ENCODE measurements at regions of chr17 and their contacts with region 1.

Region 1: DNA sequence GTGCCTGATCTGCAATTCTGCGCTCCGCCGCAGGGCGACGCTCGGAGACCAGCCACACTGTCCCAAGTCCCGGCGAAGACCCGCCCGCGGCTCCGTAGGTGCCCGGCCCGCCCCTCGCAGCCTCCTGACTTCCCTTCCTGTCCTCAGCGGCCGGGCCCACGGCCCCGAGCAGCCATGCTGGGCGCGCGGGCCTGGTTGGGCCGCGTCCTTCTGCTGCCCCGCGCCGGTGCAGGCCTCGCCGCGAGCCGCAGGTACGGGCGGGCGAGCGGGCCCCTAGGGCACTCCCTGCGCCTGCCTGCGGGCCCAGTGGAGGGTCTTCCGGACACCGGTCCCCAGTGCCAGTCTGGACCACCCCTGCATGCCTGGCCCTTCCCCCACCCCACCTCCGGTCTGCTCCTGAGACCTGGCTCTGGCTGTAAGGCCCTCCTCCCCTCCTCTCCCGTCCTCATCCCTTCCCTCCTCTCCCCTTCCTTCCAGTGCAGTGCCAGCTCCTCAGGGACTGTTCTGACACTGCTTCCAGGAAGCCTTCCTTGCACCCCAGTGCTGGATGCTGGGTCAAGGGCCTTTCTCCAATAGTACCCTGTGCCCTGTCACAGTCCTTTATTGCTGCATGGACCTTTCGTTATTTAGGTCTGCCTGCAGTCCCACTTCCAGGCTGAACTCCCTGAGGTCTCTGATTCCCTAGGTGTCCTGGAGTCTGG is at the start of gene SPATA20:
- DNase-seq: peak; percentile 84 to 90 (median 88)
- ATAC-seq: peak; percentile 84
- H3K4me3 ChIP-seq: peak within 1 kb of the TSS; percentile 33
- H3K27ac ChIP-seq: peak within 1 kb of the TSS; percentile 26; the same call in 1 of the 3 replicates
- H3K4me1 ChIP-seq: peaks cover 15 to 53% of the 10 kb centered on the region in 2 experiments; a peak in 4 of 5 replicates
- H3K27me3 ChIP-seq: 0 out of 5 replicates have a peak, but pooled peaks cover 0 to 6% of the 10 kb centered on the region in 2 experiments
- CTCF ChIP-seq: peak; percentile 95 to 97 (median 95)
- EP300 ChIP-seq: no peak
- POLR2A ChIP-seq: no peak
- RAD21 ChIP-seq: peak; percentile 93 to 96
- polyA plus RNA-seq, gene SPATA20: 0.08 to 0.13 TPM

Region 2: DNA sequence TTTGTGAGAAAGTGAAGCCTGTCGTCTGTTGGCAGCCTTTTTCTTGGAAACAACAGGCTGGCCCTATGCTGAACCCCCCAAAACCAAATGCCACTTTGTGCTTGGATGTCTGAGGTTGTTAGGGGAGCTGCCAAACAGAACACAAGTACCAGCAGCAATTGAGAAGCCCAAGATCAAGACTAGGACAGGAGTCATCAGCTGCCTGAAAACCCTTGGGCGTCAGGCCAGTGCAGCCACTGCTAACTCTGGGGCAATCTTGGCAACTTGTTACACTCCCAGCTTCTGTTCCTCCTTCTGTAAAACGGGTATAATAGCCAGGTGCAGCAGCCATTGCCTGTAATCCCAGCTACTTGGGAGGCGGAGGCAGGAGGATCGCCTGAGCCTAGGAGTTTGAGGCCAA is 140.6 kb before region 1 on chr17:
- CTCF ChIA-PET with region 1: no interaction called
- POLR2A ChIA-PET with region 1: no interaction called
- in situ Hi-C with region 1: no loop called
- intact Hi-C with region 1: no loop called
- DNase-seq: no peak
- ATAC-seq: no peak
- H3K4me3 ChIP-seq: no peak overlapping the region
- H3K27ac ChIP-seq: no peak overlapping the region
- H3K4me1 ChIP-seq: peaks cover 0 to 4% of the 10 kb centered on the region in 2 experiments; a peak in 2 of 5 replicates
- H3K27me3 ChIP-seq: no peaks in the 10 kb centered on the region; a peak in 1 of 5 replicates
- CTCF ChIP-seq: no peak
- EP300 ChIP-seq: no peak
- POLR2A ChIP-seq: no peak
- RAD21 ChIP-seq: no peak

Region 3: DNA sequence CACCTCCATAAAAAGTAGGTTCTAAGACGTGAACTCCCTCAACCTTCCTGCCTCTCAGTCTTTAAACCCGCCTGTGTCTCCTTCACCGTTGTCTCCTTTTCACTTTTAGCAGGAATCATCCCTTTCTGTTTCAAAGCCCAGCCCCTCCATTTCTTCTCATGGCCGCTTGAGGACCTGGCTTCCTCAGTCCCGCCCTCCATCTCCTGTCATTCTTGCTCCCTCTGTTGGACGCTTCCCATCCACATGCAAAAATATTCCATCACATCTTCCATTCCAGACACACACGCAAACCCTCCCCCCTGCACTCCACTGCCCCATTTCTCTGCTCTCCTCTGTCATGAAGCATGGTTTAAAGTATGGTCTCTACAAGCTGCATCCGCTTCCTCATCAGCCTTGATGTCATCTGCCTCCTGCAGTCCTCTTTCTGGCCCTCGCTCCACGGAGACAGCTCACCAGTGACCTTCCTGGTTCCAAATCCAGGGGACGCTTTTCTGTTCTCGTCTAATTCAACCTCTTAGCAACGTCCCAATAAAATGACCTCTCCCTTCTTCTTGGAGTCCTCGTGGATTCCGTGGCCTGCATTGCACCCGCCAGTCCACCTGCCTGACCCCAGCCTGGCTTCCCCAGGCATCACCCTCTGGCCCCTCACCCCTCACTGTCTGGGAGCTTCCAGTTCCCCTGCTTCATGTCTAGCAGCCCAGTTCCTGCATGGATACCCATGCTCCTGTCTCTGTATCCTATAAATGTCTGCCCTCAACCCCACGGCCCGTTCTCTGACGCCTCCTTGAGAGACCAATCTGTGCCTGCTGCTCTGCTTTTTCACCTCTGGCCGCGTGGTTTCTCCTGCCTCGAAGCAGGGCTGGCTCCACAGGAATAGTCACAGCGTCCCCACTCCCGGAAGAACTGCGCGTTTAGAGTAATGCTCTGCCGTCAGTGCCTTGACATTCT is 134.4 kb after region 1 on chr17:
- CTCF ChIA-PET with region 1: interaction called, 7 read pairs
- POLR2A ChIA-PET with region 1: interaction called, 3 read pairs
- in situ Hi-C with region 1: no loop called
- intact Hi-C with region 1: loop called (anchors 1 kb)
- DNase-seq: peak; percentile 73 to 79 (median 76)
- ATAC-seq: peak; percentile 86
- H3K4me3 ChIP-seq: no peak overlapping the region
- H3K27ac ChIP-seq: no peak overlapping the region
- H3K4me1 ChIP-seq: peaks cover 4 to 11% of the 10 kb centered on the region in 2 experiments; a peak in 3 of 5 replicates
- H3K27me3 ChIP-seq: peaks cover 5 to 31% of the 10 kb centered on the region in 2 experiments; a peak in 4 of 5 replicates
- CTCF ChIP-seq: peak; percentile 86 to 98 (median 97)
- EP300 ChIP-seq: no peak
- POLR2A ChIP-seq: no peak
- RAD21 ChIP-seq: peak; percentile 90 to 96

Region 4: GRCh38 chr17:50697663-50698274 is 150.6 kb after region 1 on chr17:
- CTCF ChIA-PET with region 1: interaction called, 11 read pairs
- POLR2A ChIA-PET with region 1: interaction called, 4 read pairs
- in situ Hi-C with region 1: loop called (anchors 5 kb)
- intact Hi-C with region 1: loop called (anchors 1 kb)
- DNase-seq: no peak
- ATAC-seq: no peak
- H3K4me3 ChIP-seq: no peak overlapping the region
- H3K27ac ChIP-seq: no peak overlapping the region
- H3K4me1 ChIP-seq: no peaks in the 10 kb centered on the region
- H3K27me3 ChIP-seq: no peaks in the 10 kb centered on the region
- CTCF ChIP-seq: peak in 2 of 3 experiments; percentile 11 to 16; a peak in 1 of 6 replicates
- EP300 ChIP-seq: no peak
- POLR2A ChIP-seq: no peak
- RAD21 ChIP-seq: 0 out of 4 replicates have a peak, but pooled peaks of 1 of the 2 experiments have one; percentile 2

Region 5: DNA sequence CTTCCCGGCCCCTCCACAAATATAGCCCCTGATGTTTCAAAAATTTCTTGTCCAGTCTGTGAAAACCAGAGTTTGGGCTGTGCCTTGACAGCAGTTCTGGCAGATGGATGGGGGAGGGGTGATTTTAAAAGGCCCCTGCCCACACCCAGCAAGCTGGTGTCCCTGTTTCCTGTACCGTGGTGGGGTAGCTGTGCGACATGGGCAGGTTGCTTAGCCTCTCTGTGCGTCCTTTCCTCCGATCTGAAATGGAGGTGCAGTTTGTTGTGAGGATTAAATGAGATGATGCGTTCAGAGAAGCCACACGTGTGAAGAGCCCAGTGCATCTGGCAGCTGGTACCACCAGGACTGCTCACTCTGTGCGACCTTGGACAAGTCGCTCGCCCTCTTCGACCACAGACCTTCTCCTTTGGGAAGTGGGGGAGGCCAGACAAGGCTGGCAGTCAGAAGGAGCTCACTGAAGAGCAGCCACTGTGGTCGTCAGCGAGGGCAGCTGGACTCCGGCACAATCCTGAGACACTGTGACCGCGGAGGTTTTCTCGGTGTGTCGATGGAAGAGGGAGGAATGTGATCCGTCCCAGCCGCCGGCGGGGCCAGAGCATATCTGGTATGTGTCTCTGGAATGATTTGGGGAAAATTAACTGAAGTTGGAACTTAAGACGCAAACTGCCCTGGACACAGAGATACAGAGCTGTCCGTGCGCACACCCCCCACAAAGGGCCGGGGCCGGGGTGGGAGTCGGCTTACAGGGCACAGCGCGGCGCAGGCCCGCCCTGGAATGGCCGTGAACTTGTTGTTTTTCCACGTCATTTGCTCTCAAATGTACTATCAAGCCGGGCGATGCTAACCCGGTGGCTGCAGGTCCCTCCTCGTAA is 287.5 kb after region 1 on chr17:
- CTCF ChIA-PET with region 1: no interaction called
- POLR2A ChIA-PET with region 1: no interaction called
- in situ Hi-C with region 1: loop called (anchors 5 kb)
- intact Hi-C with region 1: no loop called
- DNase-seq: no peak
- ATAC-seq: no peak; the same call in 2 of the 3 replicates
- H3K4me3 ChIP-seq: no peak overlapping the region
- H3K27ac ChIP-seq: no peak overlapping the region
- H3K4me1 ChIP-seq: peaks cover 18 to 54% of the 10 kb centered on the region in 2 experiments
- H3K27me3 ChIP-seq: peaks cover 0 to 20% of the 10 kb centered on the region in 2 experiments; a peak in 3 of 5 replicates
- CTCF ChIP-seq: no peak
- EP300 ChIP-seq: no peak
- POLR2A ChIP-seq: no peak
- RAD21 ChIP-seq: no peak

Region 6: GRCh38 chr17:50944054-50944901 is 397.1 kb after region 1 on chr17:
- CTCF ChIA-PET with region 1: no interaction called
- POLR2A ChIA-PET with region 1: no interaction called
- in situ Hi-C with region 1: no loop called
- intact Hi-C with region 1: loop called (anchors 5 kb)
- DNase-seq: peak; percentile 95 to 97 (median 96)
- ATAC-seq: peak; percentile 94
- H3K4me3 ChIP-seq: peak overlapping the region; percentile 44
- H3K27ac ChIP-seq: peak overlapping the region; percentile 93
- H3K4me1 ChIP-seq: peaks cover 67 to 85% of the 10 kb centered on the region in 2 experiments
- H3K27me3 ChIP-seq: no peaks in the 10 kb centered on the region
- CTCF ChIP-seq: no peak
- EP300 ChIP-seq: peak; percentile 76
- POLR2A ChIP-seq: peak; percentile 80
- RAD21 ChIP-seq: peak in 1 of 2 experiments; percentile 27; a peak in 1 of 4 replicates

Region 7: DNA sequence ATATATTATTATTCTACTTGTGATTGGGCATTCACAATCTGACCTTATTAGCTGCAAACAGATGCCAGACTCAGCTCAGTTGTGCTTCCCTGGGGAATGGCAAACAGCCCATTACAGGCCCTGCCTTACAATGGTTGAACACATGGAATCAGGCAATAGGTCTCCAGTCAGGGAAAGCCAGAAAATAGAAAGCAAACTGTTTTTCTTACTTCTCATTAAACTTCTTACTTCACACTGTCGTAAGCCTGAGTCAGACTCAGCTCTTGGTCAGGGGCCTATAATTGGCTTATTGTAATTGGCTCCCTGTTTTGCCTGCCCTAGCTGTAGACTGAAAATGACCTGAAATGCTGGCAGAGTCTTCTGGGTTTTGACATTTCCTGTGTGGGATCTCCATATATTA is 1688.3 kb after region 1 on chr17:
- CTCF ChIA-PET with region 1: no interaction called
- POLR2A ChIA-PET with region 1: no interaction called
- in situ Hi-C with region 1: no loop called
- intact Hi-C with region 1: no loop called
- DNase-seq: no peak
- ATAC-seq: no peak
- H3K4me3 ChIP-seq: no peak overlapping the region
- H3K27ac ChIP-seq: no peak overlapping the region
- H3K4me1 ChIP-seq: no peaks in the 10 kb centered on the region
- H3K27me3 ChIP-seq: no peaks in the 10 kb centered on the region
- CTCF ChIP-seq: no peak
- EP300 ChIP-seq: no peak
- POLR2A ChIP-seq: no peak
- RAD21 ChIP-seq: no peak

Measured in K562 (cell line).